Activated T-helper 1 cell treated with anti-CD3 and anti-CD28 coated beads, Interleukin-12 subunit alpha, Interleukin-12 subunit beta, Interleukin-2, Interleukin-4 antibody, amounts not matched to agents 30 ng/mL and 10 ng/mL and 1 ng/mL, durations not matched to agents 14 hours and 24 hours and 36 hours (primary cell): ENCODE measurements at regions of chr4 and their contacts with region 1.

Region 1: GRCh38 chr4:88284439-88285234 is at the start of gene PPM1K:
- DNase-seq: peak; percentile 99
- H3K4me3 Mint-ChIP-seq: peak within 1 kb of the TSS; percentile 99
- H3K27ac Mint-ChIP-seq: peak within 1 kb of the TSS; percentile 99
- H3K4me1 Mint-ChIP-seq: peaks cover 47% of the 10 kb centered on the region
- H3K27me3 Mint-ChIP-seq: no peaks in the 10 kb centered on the region
- total RNA-seq, gene PPM1K: 37.3 and 39.5 TPM in 2 replicates

Region 2: GRCh38 chr4:87422104-87423052 is 862.3 kb before region 1 on chr4 and contains the start of gene NUDT9:
- intact Hi-C with region 1: loop called (anchors 5 kb)
- DNase-seq: peak; percentile 79
- H3K4me3 Mint-ChIP-seq: peak within 1 kb of the TSS; percentile 99
- H3K27ac Mint-ChIP-seq: peak within 1 kb of the TSS; percentile 95
- H3K4me1 Mint-ChIP-seq: peaks cover 30% of the 10 kb centered on the region
- H3K27me3 Mint-ChIP-seq: peaks cover 5% of the 10 kb centered on the region
- total RNA-seq, gene NUDT9: 13.9 and 14.6 TPM in 2 replicates

Region 3: DNA sequence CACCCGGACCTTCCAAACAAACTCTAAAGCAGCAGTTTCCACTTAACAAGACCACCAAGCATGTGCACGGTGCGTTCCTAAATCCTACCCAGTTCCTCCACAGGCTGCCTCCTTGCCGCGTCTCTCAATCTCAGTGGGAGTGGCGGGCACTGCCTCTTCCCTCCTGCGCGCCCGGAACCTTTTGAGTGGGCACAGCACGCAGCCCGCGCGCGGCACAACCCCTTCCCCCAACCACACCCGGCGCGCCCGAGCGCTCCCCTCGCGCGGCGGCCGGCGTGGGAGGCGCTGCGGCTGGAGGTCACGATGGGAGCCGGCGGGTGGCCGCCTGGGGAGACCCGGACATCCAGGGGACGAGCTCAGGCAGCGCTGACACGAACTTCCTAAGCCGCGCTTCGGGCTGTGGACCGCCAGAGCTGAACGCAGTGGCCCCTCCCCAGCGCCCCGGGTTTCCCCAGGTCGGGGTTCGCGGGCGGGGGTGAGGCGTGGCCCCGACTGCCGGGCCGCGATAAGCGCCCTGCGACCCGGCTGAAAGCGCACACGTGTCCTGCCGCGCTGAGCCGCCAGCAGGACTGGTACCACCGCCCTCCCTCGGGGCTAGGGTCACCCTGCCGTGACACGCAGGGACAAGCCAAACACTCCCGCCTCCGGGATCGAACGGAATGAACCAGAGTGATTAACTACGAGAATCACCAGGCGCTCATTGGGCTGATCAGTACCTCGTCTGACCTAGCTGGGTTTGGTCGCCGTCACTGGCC is 126.0 kb before region 1 on chr4 and contains the start of gene ABCG2:
- intact Hi-C with region 1: loop called (anchors 2 kb)
- DNase-seq: peak; percentile 46
- H3K4me3 Mint-ChIP-seq: peak within 1 kb of the TSS; percentile 80
- H3K27ac Mint-ChIP-seq: peak within 1 kb of the TSS; percentile 16
- H3K4me1 Mint-ChIP-seq: peaks cover 17% of the 10 kb centered on the region
- H3K27me3 Mint-ChIP-seq: peaks cover 18% of the 10 kb centered on the region
- total RNA-seq, gene ABCG2: 0.34 TPM in 2 replicates

Region 4: DNA sequence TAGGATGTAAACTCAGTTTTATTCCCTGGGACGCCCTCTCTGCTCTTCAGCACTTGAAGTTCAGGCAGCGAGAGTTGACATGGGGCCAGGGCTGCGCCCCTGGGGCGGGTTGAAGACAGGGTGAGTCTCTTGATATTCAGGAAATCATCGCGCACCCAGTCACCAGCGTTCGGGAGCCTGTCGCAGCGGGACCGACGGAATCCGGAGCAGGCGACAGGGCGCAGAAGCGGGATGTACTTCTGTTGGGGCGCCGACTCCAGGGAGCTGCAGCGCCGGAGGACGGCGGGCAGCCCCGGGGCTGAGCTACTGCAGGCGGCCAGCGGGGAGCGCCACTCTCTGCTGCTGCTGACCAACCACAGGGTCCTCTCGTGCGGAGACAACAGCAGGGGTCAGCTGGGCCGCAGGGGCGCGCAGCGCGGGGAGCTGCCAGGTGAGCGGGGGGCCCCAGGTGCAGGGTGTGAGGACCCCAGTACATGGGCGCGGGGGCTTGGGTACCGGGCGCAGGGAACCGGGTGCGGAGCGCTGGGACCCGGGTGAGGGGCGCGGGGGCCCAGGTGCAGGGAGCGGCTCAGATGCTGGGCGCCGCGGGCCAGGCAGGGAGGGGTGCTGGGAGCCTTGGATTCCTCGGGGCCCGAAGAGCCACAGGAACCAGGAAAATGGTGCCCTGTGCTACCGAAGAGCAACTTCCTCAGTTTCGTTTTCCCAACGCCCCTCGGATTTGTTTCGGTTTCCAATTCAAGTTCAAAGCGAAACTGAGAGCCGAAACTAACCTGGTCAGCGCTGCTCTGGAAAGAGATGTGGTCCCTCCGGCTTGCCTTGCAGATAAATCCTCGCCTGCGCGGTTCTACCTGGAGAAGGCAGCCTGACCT is 94.3 kb after region 1 on chr4 and contains the start of gene HERC6:
- intact Hi-C with region 1: loop called (anchors 1 kb)
- DNase-seq: peak; percentile 80
- H3K4me3 Mint-ChIP-seq: peak within 1 kb of the TSS; percentile 89
- H3K27ac Mint-ChIP-seq: peak within 1 kb of the TSS; percentile 81
- H3K4me1 Mint-ChIP-seq: peaks cover 47% of the 10 kb centered on the region
- H3K27me3 Mint-ChIP-seq: no peaks in the 10 kb centered on the region
- total RNA-seq, gene HERC6: 6.0 and 9.1 TPM in 2 replicates

Region 5: GRCh38 chr4:88591787-88592599 is 307.4 kb after region 1 on chr4 and contains the start of gene HERC3:
- intact Hi-C with region 1: loop called (anchors 2 kb)
- DNase-seq: peak; percentile 88
- H3K4me3 Mint-ChIP-seq: peak within 1 kb of the TSS; percentile 91
- H3K27ac Mint-ChIP-seq: peak within 1 kb of the TSS; percentile 88
- H3K4me1 Mint-ChIP-seq: peaks cover 35% of the 10 kb centered on the region
- H3K27me3 Mint-ChIP-seq: peaks cover 28% of the 10 kb centered on the region
- total RNA-seq, gene HERC3: 12.8 and 14.2 TPM in 2 replicates

Region 6: DNA sequence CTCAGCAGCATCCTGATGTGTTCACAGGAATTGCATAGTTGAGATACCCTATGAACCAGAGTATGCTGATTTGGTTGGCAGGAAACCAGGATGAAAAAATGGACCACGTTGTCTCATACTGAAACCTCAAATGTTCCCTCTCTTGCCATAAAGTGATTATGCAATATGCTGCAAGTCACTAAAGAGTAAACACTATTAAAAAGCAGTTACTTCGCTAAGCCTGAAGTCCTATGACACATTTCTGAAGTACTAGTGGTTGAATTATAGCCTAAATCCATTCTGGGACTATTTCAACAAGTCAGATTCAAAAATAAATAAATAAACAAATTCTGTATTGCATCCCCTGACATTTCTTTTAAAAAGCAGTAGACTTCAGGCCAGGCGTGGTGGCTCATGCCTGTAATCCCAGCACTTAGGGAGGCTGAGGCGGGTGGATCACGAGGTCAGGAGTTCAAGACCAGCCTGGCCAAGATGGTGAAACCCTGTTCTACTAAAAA is 519.0 kb after region 1 on chr4:
- intact Hi-C with region 1: loop called (anchors 5 kb)
- DNase-seq: peak; percentile 17
- H3K4me3 Mint-ChIP-seq: no peak overlapping the region
- H3K27ac Mint-ChIP-seq: no peak overlapping the region
- H3K4me1 Mint-ChIP-seq: peaks cover 13% of the 10 kb centered on the region
- H3K27me3 Mint-ChIP-seq: peaks cover 16% of the 10 kb centered on the region